Right ventricle myocardium superior (tissue), 1 donor: ENCODE measurements at regions of chr4 and their contacts with region 1.

Region 1: GRCh38 chr4:88823058-88823919 is 125.7 kb upstream of the NAP1L5 start:
- DNase-seq: peak; percentile 92
- ATAC-seq: peak; percentile 96

Region 2: GRCh38 chr4:88706574-88706973 is 116.7 kb before region 1 on chr4:
- intact Hi-C with region 1: loop called (anchors 10 kb)
- DNase-seq: no peak
- ATAC-seq: peak; percentile 87

Region 3: DNA sequence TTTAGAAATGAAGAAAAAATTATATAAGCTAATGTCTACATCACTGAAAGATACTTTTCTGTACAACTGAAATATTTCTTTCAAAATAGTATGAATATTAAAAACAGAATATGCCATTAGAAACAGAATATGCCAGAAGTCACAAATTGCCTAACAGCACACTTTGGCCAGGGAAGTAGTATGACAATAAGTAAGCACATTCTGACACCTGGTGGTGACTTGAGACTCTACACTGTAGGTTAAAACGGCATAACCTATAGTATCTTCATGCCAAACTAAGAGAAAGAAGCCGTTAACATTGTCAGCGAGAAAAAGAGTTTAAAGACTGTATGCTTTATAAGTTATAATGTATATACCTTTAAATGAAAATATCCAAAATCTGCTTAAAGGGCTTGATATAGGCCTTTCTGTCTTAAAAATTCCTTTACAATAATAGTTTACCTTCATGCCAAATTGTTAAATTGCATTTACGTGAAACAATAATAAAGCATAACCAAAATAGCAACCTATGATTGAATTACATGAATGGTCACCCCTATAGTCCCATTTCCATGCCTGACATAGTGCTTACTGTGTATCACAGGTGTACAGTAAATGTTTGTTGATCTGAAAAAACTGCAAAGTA is 200.9 kb after region 1 on chr4:
- intact Hi-C with region 1: loop called (anchors 2 kb)
- DNase-seq: no peak
- ATAC-seq: peak; percentile 97

Region 4: GRCh38 chr4:89110986-89111832 is 287.9 kb after region 1 on chr4 and contains the start of gene TIGD2:
- intact Hi-C with region 1: loop called (anchors 5 kb)
- DNase-seq: peak; percentile 92
- ATAC-seq: peak; percentile 99
- total RNA-seq, gene TIGD2: 2.4 TPM